B cell (primary cell): ENCODE measurements at regions of chr4 and their contacts with region 1.

Region 1: DNA sequence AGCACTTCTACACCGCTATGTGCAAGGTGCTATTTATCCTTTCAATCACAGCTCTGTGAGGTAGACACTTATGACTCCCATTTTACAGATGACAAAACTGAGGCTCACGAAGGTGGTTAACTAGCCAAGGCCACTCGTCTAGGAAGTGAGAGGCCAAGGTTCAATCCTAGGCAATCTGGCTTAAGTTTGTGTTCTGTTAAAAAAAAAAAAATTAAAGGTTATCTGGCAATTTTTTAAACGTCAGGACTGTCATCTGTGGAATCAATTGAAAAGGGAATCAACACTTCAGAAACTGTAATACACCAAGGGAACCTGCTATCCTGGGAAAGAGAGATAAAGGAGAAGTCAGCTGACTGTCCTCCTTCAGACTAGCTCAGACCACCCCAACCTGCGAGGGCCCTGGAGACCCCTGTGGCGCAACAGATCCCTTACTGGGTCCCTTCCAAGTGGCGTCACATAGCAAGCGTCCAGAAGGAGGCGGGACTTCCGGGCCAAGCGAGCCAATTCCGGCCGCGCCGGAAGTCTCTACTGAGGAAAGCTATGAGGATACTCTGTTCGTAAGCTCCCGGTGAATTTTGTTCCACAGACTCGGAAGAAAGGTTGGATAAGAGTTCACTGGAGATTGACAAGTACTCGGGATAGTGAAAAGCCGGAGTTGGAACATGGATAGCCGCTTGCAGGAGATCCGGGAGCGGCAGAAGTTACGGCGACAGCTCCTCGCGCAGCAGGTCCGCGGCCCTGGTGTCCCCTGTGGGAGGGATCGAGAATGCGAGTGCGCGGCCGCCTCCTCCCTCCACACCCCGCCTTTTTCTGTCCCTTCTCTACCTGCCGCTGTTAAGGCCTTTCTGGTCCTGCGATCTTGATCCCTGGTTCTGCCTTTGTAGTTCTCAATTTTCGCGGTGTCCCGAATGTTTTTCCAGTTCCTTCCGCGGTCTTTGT is at the start of gene METTL14:
- DNase-seq: peak; percentile 93
- ATAC-seq: peak; percentile 96
- H3K4me3 ChIP-seq: peak within 1 kb of the TSS; percentile 63 to 94 (median 83)
- H3K4me3 Mint-ChIP-seq: peak within 1 kb of the TSS; percentile 95
- H3K27ac ChIP-seq: peak within 1 kb of the TSS; percentile 71 to 86
- H3K27ac Mint-ChIP-seq: peak within 1 kb of the TSS; percentile 93
- H3K4me1 ChIP-seq: peaks cover 11 to 16% of the 10 kb centered on the region in 2 donors
- H3K4me1 Mint-ChIP-seq: peaks cover 21% of the 10 kb centered on the region
- H3K27me3 ChIP-seq: no peaks in the 10 kb centered on the region
- H3K27me3 Mint-ChIP-seq: no peaks in the 10 kb centered on the region
- CTCF ChIP-seq: no peak
- total RNA-seq, gene METTL14: 65.6 and 74.8 TPM in 2 replicates

Region 2: GRCh38 chr4:118586357-118586790 is 98.8 kb before region 1 on chr4:
- CTCF ChIA-PET with region 1: no interaction called
- POLR2A ChIA-PET with region 1: no interaction called
- intact Hi-C with region 1: loop called (anchors 1 kb)
- DNase-seq: no peak
- ATAC-seq: no peak
- H3K4me3 ChIP-seq: no peak overlapping the region
- H3K4me3 Mint-ChIP-seq: no peak overlapping the region
- H3K27ac ChIP-seq: no peak overlapping the region
- H3K27ac Mint-ChIP-seq: no peak overlapping the region
- H3K4me1 ChIP-seq: peaks cover 0 to 6% of the 10 kb centered on the region in 2 donors
- H3K4me1 Mint-ChIP-seq: peaks cover 9% of the 10 kb centered on the region
- H3K27me3 ChIP-seq: peaks cover 0 to 15% (median 4%) of the 10 kb centered on the region in 4 experiments
- H3K27me3 Mint-ChIP-seq: peaks cover 27% of the 10 kb centered on the region
- CTCF ChIP-seq: no peak

Region 3: GRCh38 chr4:119010909-119011606 is 325.9 kb after region 1 on chr4:
- CTCF ChIA-PET with region 1: no interaction called
- POLR2A ChIA-PET with region 1: no interaction called
- intact Hi-C with region 1: no loop called
- DNase-seq: no peak
- ATAC-seq: no peak
- H3K4me3 ChIP-seq: no peak overlapping the region
- H3K4me3 Mint-ChIP-seq: no peak overlapping the region
- H3K27ac ChIP-seq: no peak overlapping the region
- H3K27ac Mint-ChIP-seq: no peak overlapping the region
- H3K4me1 ChIP-seq: no peaks in the 10 kb centered on the region
- H3K4me1 Mint-ChIP-seq: no peaks in the 10 kb centered on the region
- H3K27me3 ChIP-seq: no peaks in the 10 kb centered on the region
- H3K27me3 Mint-ChIP-seq: peaks cover 12% of the 10 kb centered on the region
- CTCF ChIP-seq: no peak